ENCODE measurements at regions of chr3 and their contacts with region 1.

Region 1: GRCh38 chr3:11288786-11289682 is 16.8 kb downstream of the ATG7 start:
- DNase-seq: no peak
- H3K4me3 ChIP-seq: no peak overlapping the region
- H3K4me3 Mint-ChIP-seq: peak overlapping the region in 5 of 8 donors; percentile 6 to 45 (median 25)
- H3K27ac ChIP-seq: peak overlapping the region; percentile 11
- H3K27ac Mint-ChIP-seq: peak overlapping the region; percentile 54 to 98 (median 85)
- H3K4me1 ChIP-seq: peaks cover 47% of the 10 kb centered on the region
- H3K4me1 Mint-ChIP-seq: peaks cover 39 to 65% (median 51%) of the 10 kb centered on the region in 4 donors
- H3K27me3 ChIP-seq: no peaks in the 10 kb centered on the region
- H3K27me3 Mint-ChIP-seq: no peaks in the 10 kb centered on the region

Region 2: GRCh38 chr3:10822708-10823515 is 466.1 kb before region 1 on chr3:
- CTCF ChIA-PET with region 1: no interaction called
- POLR2A ChIA-PET with region 1: no interaction called
- intact Hi-C with region 1: no loop called
- DNase-seq: no peak
- H3K4me3 ChIP-seq: no peak overlapping the region
- H3K4me3 Mint-ChIP-seq: no peak overlapping the region
- H3K27ac ChIP-seq: no peak overlapping the region
- H3K27ac Mint-ChIP-seq: peak overlapping the region in 1 of 7 donors; percentile 17
- H3K4me1 ChIP-seq: no peaks in the 10 kb centered on the region
- H3K4me1 Mint-ChIP-seq: no peaks in the 10 kb centered on the region
- H3K27me3 ChIP-seq: no peaks in the 10 kb centered on the region
- H3K27me3 Mint-ChIP-seq: peaks cover 6 to 14% of the 10 kb centered on the region in 2 donors

Region 3: DNA sequence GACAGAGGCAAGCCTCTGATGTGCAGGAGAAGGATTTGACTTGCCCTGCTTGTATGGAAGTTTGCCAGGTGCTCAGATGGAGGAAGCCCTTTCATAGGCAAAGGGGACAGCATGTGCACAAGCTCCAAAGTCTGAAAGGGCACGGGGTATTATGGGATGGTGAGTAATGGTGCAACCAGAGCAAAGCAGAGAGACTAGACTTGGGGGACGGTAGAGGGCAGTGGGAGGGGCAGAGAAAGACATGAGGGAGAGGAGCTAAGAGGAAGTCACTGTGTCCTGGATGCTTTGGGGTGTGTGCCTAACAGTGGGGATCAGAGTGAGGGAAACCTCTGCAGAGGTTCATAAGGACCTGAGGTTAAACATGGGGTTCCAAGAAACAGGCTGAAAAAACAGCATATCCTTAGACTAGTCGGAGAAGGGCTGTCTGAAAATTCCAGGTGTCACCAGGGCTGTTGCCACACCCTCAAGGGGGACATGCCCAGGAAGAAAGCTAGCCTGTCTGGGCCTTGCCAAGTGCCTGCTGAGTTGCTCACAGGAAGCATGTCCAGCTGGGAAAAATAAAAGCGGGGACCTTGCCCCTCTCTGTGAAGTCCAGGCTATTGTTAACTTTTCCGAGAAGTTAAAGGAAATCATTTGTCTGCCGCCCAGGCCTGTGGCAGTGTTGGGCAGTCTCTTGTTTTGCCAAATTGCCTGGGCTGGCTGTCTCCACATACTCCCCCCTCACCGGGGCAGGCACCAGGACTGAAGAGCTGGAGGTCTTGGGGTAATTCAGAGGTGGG is 87.6 kb before region 1 on chr3:
- CTCF ChIA-PET with region 1: no interaction called
- POLR2A ChIA-PET with region 1: no interaction called
- intact Hi-C with region 1: no loop called
- DNase-seq: no peak
- H3K4me3 ChIP-seq: no peak overlapping the region
- H3K4me3 Mint-ChIP-seq: no peak overlapping the region
- H3K27ac ChIP-seq: no peak overlapping the region
- H3K27ac Mint-ChIP-seq: no peak overlapping the region
- H3K4me1 ChIP-seq: no peaks in the 10 kb centered on the region
- H3K4me1 Mint-ChIP-seq: no peaks in the 10 kb centered on the region
- H3K27me3 ChIP-seq: no peaks in the 10 kb centered on the region
- H3K27me3 Mint-ChIP-seq: peaks cover 9 to 10% of the 10 kb centered on the region in 2 donors

Region 4: DNA sequence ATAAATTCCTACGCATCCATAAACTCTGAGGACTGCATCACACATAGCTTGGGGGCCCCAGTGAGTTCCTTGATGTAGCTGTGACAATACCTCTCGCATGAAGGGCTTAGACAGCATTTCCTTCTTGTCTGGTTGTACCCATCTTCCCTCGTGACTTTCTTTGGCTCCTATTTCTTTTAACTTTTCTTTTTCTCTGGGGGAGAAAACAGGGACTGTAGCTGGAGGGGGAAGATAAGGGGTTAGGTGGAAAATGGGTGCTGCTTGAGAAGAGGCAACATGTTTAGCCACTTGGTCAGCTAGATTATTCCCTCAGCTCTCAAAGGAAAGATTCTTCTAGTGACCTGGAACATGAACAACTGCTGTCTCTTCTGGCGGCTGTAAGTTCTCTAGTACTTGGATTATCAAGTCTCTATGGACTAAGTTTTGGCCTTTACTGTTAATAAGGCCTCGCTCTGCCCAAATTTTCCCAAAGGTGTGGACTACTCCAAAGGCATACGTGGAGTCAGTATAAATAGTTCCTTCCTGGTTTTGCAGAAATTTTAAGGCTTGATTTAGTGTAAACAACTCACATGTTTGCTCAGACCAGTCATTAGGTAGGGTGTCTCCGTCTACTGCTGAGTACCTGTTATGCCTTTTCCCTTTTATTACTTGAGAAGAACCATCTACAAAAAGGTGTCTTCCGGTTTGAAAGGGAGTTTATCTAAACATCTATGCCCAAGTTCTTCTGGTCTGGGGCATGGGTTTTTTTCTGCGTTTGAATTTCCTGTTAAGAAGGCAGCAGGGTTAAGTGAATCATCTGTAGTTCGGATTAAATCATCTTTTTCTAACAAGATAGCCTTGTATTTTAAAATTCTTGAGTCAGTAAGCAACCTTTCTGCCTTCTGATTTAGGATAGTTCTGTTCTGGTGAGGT is 37.9 kb before region 1 on chr3:
- CTCF ChIA-PET with region 1: no interaction called
- POLR2A ChIA-PET with region 1: no interaction called
- intact Hi-C with region 1: loop called (anchors 5 kb)
- DNase-seq: peak in 4 of 5 donors; percentile 16 to 31 (median 24)
- H3K4me3 ChIP-seq: no peak overlapping the region
- H3K4me3 Mint-ChIP-seq: peak overlapping the region; percentile 1 to 78 (median 57)
- H3K27ac ChIP-seq: no peak overlapping the region
- H3K27ac Mint-ChIP-seq: peak overlapping the region; percentile 73 to 88 (median 81)
- H3K4me1 ChIP-seq: peaks cover 18% of the 10 kb centered on the region
- H3K4me1 Mint-ChIP-seq: peaks cover 12 to 33% (median 19%) of the 10 kb centered on the region in 4 donors
- H3K27me3 ChIP-seq: no peaks in the 10 kb centered on the region
- H3K27me3 Mint-ChIP-seq: peaks cover 2 to 3% of the 10 kb centered on the region in 2 donors

Measured in CD4-positive, alpha-beta memory T cell (primary cell).